Activated CD8-positive, alpha-beta T cell treated with anti-CD3 and anti-CD28 coated beads for 36 hours (primary cell): ENCODE measurements at regions of chr6 and their contacts with region 1.

Region 1: DNA sequence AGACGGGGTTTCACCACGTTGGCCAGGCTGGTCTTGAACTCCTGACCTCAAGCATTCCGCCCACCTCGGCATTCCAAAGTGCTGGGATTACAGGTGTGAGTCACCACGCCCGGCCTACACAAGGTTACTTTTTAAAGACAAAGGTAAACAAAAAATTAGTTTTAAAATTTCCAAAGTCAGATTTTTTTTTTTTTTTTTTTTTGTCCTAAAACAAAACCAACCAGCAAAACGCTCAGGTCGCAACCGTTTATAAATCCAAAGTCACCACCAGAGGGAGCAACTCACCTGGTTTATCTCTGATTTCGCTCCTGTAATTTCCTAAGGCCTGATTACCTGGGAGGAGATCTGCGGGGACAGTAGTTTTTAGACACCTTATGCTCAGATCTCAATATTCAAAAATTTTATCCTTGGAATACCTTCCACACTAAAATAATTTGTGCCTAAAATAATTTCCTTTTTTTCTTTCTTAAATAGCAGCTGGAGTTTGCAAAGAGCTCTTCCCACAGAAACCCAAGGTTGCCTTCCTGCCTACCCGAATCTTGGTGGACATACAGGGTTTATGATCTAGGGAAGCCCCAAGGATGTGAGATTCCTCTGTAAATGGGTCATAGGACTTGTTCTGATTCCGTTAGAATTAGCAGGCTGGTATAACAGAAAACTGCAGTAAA is 19.8 kb upstream of the TREM1 start:
- DNase-seq: peak; percentile 70
- ATAC-seq: no peak
- H3K4me3 Mint-ChIP-seq: no peak overlapping the region
- H3K27ac Mint-ChIP-seq: no peak overlapping the region
- H3K4me1 Mint-ChIP-seq: peaks cover 13% of the 10 kb centered on the region
- H3K27me3 Mint-ChIP-seq: peaks cover 9% of the 10 kb centered on the region
- CTCF ChIP-seq: peak; percentile 77

Region 2: DNA sequence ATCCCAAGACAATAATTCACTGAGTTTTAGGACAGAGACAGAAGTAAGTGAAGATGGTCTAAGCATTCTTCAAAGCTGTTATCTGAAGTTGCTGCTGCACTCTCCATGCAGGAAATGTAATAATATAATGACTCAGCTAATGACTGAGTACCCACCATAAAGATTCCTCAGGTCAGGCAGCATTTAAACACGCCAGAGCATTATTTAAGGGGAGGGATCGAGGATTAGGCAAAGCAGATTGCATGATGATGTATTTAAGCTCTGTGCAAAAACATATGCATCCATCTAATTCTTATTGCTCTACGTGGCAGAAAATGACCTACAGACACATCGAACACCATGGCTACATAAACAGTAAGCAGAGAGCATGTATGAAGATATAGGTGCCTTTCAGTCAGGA is 483.7 kb before region 1 on chr6:
- CTCF ChIA-PET with region 1: no interaction called
- POLR2A ChIA-PET with region 1: no interaction called
- intact Hi-C with region 1: no loop called
- DNase-seq: no peak
- ATAC-seq: no peak
- H3K4me3 Mint-ChIP-seq: no peak overlapping the region
- H3K27ac Mint-ChIP-seq: no peak overlapping the region
- H3K4me1 Mint-ChIP-seq: peaks cover 3% of the 10 kb centered on the region
- H3K27me3 Mint-ChIP-seq: peaks cover 18% of the 10 kb centered on the region
- CTCF ChIP-seq: no peak

Region 3: DNA sequence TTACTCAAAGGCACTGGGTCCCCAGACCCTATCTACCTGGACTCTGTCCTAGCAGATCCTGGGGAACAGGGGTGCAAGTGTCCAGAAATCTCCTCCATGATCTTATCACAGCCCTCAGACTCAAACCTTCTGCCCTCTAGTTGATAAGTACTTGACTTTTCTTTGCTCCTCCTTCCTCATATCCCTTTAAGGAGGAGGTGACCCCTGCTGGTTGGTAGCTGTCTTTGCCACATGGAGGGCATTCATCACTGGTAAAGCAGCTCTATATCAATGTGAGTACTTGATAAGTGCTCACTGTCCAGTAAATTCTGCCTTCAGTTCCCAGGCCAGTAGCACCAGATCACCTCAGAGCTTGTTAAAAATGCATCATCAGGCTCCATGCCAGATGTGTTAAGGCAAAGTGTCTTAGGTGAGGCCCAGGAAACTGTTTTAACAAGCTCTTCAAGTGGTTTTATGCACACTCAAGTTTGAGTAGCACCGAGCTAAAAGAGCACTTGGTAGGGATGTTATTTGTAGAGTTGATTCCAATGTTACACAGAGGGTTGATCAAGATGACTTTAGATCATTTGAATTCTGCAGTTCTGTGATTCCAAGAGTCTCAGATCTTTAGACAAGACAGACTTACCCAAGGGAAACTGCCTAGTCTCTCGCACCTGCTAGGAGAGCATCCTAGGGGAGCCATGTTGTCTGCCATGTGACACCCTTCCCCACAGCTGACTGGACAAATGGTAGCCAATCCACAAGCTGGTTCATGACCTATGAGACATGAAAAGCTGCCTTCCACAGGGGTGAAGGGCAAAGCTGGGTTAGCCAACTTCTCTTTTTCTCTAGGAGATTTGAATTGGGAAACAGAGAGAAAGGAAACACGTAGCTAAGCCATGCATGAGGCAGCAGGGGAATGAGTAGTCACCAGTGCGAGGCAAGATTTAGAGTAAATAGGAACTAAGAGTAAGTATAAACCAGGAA is 124.0 kb before region 1 on chr6:
- CTCF ChIA-PET with region 1: interaction called, 10 read pairs
- POLR2A ChIA-PET with region 1: no interaction called
- intact Hi-C with region 1: no loop called
- DNase-seq: peak; percentile 66
- ATAC-seq: peak; percentile 96
- H3K4me3 Mint-ChIP-seq: no peak overlapping the region
- H3K27ac Mint-ChIP-seq: no peak overlapping the region
- H3K4me1 Mint-ChIP-seq: peaks cover 11% of the 10 kb centered on the region
- H3K27me3 Mint-ChIP-seq: no peaks in the 10 kb centered on the region
- CTCF ChIP-seq: peak; percentile 64

Region 4: DNA sequence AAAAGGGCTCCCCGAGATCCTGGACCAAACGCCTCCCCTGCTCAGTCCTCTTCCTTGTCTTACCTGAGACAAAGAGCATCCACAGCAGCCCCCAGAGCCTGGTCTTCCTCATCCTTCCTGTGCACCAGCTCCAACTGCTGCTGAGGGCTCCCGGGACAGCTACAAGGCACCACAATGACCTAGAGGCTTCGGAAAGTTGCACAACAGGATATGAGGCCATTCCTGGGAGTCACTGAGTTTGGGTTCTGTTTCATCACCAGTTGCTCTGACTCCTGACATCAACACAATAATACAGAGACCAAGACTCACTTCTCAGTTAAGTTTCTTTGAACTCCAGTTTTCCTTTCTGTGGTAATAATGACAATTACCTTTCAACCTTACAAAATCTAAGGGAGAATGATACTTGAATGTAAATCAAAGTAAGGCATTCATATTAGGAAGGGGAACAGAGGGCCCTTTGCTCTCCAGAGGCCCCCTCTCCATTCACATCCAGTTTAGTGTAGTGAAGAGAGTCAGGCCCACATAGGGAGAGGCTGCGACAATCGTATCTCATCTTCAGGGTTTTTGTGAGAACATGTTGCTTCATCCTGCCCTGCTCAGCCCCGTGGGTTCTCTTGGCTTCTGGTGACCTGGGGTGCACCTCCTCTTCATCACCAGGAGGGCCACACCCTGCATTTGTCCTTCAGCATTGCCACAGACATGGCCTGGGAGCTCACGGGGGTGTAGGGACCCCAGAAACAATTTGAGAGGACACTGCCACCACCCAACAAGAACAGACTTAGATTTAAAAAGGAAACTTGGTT is 19.6 kb before region 1 on chr6 and contains the start of gene TREM1:
- CTCF ChIA-PET with region 1: interaction called, 23 read pairs
- POLR2A ChIA-PET with region 1: no interaction called
- intact Hi-C with region 1: no loop called
- DNase-seq: no peak
- ATAC-seq: peak; percentile 28
- H3K4me3 Mint-ChIP-seq: no peak within 1 kb of the TSS
- H3K27ac Mint-ChIP-seq: peak within 1 kb of the TSS; percentile 43
- H3K4me1 Mint-ChIP-seq: peaks cover 8% of the 10 kb centered on the region
- H3K27me3 Mint-ChIP-seq: no peaks in the 10 kb centered on the region
- CTCF ChIP-seq: no peak
- total RNA-seq, gene TREM1: not detected

Region 5: DNA sequence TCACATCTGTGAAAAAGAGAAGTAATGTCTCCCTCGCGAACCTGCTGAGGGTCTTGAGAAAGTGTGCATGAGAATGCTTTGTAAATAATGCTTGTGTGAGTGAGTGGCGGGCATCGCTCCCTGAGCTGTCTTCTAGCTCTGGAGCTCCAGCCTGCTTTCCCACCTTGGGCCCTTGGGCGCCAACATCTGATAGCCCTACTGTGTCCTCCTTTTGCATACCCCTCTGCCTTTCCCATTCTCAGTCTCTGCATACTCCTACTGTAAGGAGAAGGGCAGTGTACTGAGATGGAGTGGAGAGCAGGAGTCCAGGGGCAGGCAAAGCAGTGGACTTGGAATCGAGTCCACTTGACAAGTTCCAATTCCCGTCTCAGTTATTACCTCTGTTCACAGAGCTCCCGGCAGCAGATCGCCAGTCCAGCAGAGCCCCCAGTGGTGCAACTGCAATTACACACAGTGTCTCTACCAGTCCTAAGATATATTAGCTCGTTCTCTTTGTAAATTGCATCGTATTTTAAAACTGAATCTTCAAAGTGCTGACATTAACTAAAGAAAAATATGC is 28.2 kb after region 1 on chr6:
- CTCF ChIA-PET with region 1: interaction called, 29 read pairs
- POLR2A ChIA-PET with region 1: interaction called, 5 read pairs
- intact Hi-C with region 1: no loop called
- DNase-seq: peak; percentile 43
- ATAC-seq: no peak
- H3K4me3 Mint-ChIP-seq: peak overlapping the region; percentile 33
- H3K27ac Mint-ChIP-seq: peak overlapping the region; percentile 93
- H3K4me1 Mint-ChIP-seq: peaks cover 59% of the 10 kb centered on the region
- H3K27me3 Mint-ChIP-seq: no peaks in the 10 kb centered on the region
- CTCF ChIP-seq: peak; percentile 36

Region 6: DNA sequence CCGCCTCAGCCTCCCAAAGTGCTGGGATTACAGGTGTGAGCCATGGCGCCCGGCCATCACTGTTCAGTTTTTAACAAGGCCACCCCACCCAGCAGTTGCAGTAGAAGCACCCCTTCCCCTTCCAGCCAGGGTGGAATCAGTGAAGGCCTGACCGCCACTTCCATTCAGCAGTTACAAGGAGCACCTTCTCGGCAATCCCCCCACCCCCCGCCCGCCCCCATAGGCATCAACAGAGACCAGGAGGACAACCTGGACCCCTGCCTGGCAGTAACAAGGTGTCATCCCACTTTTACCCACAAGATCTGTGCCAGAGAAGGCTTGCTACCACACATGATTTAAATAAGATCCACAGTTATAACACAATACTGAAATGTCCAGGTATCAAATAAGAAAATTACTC is 52.2 kb after region 1 on chr6:
- CTCF ChIA-PET with region 1: no interaction called
- POLR2A ChIA-PET with region 1: no interaction called
- intact Hi-C with region 1: no loop called
- DNase-seq: no peak
- ATAC-seq: no peak
- H3K4me3 Mint-ChIP-seq: no peak overlapping the region
- H3K27ac Mint-ChIP-seq: no peak overlapping the region
- H3K4me1 Mint-ChIP-seq: no peaks in the 10 kb centered on the region
- H3K27me3 Mint-ChIP-seq: peaks cover 1% of the 10 kb centered on the region
- CTCF ChIP-seq: no peak

Region 7: GRCh38 chr6:41683510-41684310 is 377.4 kb after region 1 on chr6:
- CTCF ChIA-PET with region 1: interaction called, 11 read pairs
- POLR2A ChIA-PET with region 1: no interaction called
- intact Hi-C with region 1: no loop called
- DNase-seq: peak; percentile 87
- ATAC-seq: peak; percentile 93
- H3K4me3 Mint-ChIP-seq: peak overlapping the region; percentile 70
- H3K27ac Mint-ChIP-seq: peak overlapping the region; percentile 68
- H3K4me1 Mint-ChIP-seq: peaks cover 5% of the 10 kb centered on the region
- H3K27me3 Mint-ChIP-seq: peaks cover 1% of the 10 kb centered on the region
- CTCF ChIP-seq: peak; percentile 86